GM12878 (cell line): ENCODE measurements at regions of chr13 and their contacts with region 1.

Region 1: DNA sequence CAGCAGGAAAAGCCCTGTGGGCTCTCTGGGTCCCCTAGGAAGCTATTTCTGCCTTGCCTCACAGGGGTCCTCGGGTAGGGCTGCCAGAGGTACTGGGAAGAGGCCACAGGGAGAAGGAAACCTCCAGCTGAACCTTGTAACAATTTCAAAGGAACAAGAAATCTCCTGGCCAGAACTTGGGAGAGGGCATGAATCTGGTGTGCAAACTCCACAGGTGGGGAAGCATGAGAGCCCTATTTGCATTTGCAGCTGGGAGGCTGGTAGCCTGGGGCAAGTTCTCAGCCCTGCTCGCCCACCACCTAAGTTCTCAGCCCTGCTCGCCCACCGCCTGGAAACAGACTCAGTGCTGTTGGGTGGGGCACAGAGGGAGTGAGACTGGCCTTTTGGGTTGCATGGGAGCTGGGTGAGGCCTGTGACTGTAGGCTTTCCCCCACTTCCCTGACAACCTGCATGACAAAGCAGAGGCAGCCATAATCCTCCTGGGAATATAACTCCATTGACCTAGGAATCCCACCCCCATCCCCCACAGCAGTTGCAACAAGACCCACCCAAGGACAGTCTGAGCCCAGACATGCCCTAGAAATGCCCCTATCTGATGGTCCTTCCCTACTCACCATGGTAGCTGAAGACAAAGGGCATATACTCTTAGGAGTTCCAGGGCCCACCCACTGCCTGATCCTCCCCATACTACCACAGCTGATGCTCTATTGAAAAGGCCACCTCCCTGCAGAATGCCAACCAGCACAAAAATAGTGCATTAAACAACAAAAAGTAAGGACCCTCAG is 11.7 kb downstream of the UGGT2 start:
- DNase-seq: no peak
- ATAC-seq: no peak
- H3K4me3 ChIP-seq: no peak overlapping the region
- H3K27ac ChIP-seq: no peak overlapping the region
- H3K4me1 ChIP-seq: no peaks in the 10 kb centered on the region
- H3K27me3 ChIP-seq: no peaks in the 10 kb centered on the region
- CTCF ChIP-seq: no peak
- EP300 ChIP-seq: no peak
- POLR2A ChIP-seq: no peak
- RAD21 ChIP-seq: no peak

Region 2: DNA sequence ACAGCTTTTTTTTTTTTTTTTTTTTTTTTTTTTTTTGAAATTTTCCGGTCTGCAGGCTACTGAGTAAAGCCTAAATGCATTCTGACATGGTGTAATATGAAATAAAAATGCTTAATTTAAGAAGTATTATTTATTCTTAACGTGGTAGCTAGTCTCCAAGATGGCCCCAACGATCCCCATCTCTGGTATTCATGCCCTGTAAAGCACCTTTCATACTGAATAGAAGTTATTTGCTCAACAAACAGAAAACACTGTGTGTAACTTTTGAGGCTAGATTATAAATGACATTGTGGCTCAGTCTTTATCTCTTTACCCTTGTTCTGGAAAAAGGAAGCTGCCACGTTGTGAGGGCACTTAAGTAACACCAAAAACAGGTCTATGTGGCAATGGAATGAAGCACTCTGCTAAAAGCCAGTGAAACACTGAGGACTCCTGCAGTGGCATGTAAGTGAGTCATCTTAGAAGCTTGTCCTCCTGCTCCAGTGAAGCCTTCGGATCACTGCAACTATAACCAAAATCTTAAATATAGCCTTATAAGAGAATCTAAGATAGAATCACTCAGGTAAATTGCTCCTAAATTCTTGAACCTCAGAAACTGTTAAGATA is 117.0 kb before region 1 on chr13:
- CTCF ChIA-PET with region 1: no interaction called
- POLR2A ChIA-PET with region 1: no interaction called
- RAD21 ChIA-PET with region 1: no interaction called
- SMC1A ChIA-PET with region 1: no interaction called
- in situ Hi-C with region 1: no loop called
- intact Hi-C with region 1: no loop called
- DNase-seq: no peak
- ATAC-seq: no peak
- H3K4me3 ChIP-seq: no peak overlapping the region
- H3K27ac ChIP-seq: no peak overlapping the region
- H3K4me1 ChIP-seq: no peaks in the 10 kb centered on the region
- H3K27me3 ChIP-seq: no peaks in the 10 kb centered on the region
- CTCF ChIP-seq: no peak
- EP300 ChIP-seq: no peak
- POLR2A ChIP-seq: no peak
- RAD21 ChIP-seq: no peak

Region 3: GRCh38 chr13:96053011-96053703 is 11.6 kb after region 1 on chr13 and contains the start of gene UGGT2:
- CTCF ChIA-PET with region 1: interaction called, 5 read pairs
- POLR2A ChIA-PET with region 1: no interaction called
- RAD21 ChIA-PET with region 1: interaction called, 3 read pairs
- SMC1A ChIA-PET with region 1: interaction called, 11 read pairs
- in situ Hi-C with region 1: no loop called
- intact Hi-C with region 1: no loop called
- DNase-seq: peak; percentile 64
- ATAC-seq: peak; percentile 98
- H3K4me3 ChIP-seq: peak within 1 kb of the TSS; percentile 90
- H3K27ac ChIP-seq: peak within 1 kb of the TSS; percentile 88
- H3K4me1 ChIP-seq: no peaks in the 10 kb centered on the region
- H3K27me3 ChIP-seq: no peaks in the 10 kb centered on the region
- CTCF ChIP-seq: no peak
- EP300 ChIP-seq: no peak
- POLR2A ChIP-seq: peak; percentile 96
- RAD21 ChIP-seq: no peak
- polyA plus RNA-seq, gene UGGT2: 4.9 to 6.3 TPM

Region 4: DNA sequence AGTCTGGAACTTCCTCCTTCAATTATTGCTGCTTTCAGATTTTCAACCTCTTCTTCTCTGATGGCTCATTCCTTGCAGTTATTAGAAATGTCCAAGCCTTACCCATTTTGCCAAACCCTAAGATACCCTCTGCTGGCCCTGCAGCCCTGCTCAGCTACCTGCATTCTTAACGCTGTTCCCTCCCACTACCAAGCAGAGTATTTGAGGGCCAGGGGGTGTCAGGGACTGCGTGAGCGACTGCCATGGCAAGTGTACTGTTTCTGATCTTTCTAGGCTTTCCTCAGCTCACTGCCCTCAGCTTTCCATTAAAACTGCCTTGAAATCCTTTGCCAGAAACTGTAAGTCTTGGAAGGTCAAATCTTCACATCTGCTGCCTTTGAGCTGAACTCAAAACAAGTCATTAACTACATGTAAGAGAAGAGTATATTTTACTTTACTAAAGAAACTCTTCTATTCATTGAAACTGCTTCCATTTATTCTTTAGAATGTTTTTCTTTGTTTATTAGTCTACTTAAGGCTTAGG is 89.4 kb after region 1 on chr13:
- CTCF ChIA-PET with region 1: no interaction called
- POLR2A ChIA-PET with region 1: no interaction called
- RAD21 ChIA-PET with region 1: no interaction called
- SMC1A ChIA-PET with region 1: no interaction called
- in situ Hi-C with region 1: no loop called
- intact Hi-C with region 1: no loop called
- DNase-seq: no peak
- ATAC-seq: no peak
- H3K4me3 ChIP-seq: no peak overlapping the region
- H3K27ac ChIP-seq: no peak overlapping the region
- H3K4me1 ChIP-seq: no peaks in the 10 kb centered on the region
- H3K27me3 ChIP-seq: no peaks in the 10 kb centered on the region
- CTCF ChIP-seq: no peak
- EP300 ChIP-seq: no peak
- POLR2A ChIP-seq: no peak
- RAD21 ChIP-seq: no peak